HEK293T (cell line): ENCODE measurements at regions of chr19 and their contacts with region 1.

Region 1: GRCh38 chr19:7381073-7381390 is 32.3 kb downstream of the ARHGEF18 start:
- DNase-seq: no peak

Region 2: DNA sequence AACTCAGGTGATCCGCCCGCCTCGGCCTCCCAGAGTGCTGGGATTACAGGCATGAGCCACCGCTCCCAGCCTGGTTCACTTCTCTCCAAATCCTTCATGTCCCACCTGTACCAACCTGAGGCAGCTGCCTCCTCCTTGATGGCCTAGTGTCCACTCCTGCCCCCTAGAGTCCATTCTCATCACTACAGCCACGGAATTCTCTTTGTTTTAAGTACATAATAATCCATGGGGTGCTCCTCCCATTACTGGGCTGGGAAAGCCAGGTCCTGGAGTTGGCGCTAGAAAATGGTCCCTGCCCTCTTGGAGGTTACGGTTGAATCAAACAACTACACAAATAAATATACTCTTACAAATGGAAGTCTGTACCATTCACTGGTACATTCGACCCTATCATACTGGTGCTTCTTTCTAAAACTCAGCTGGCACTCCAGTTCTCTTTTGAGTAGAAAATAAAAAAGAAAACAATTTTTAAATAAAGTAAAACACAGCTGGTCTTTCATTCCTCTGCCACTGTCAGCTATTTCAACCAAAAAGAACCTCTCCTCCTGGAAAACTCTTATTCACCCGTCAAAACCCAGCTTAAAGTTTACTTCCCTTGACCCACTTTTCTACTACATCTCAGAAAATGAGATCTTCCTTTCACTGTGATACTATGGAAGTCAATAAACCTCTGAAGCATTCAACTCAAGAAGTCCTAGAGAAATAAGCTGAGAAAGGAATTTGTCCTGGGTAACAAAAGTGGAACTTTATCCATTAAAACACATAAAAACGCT is 54.7 kb before region 1 on chr19:
- CTCF ChIA-PET with region 1: no interaction called
- POLR2A ChIA-PET with region 1: no interaction called
- DNase-seq: peak; percentile 53

Region 3: GRCh38 chr19:7348587-7349230 is 32.3 kb before region 1 on chr19 and contains the start of gene ARHGEF18:
- CTCF ChIA-PET with region 1: interaction called, 10 read pairs
- POLR2A ChIA-PET with region 1: no interaction called
- DNase-seq: no peak